Cardiac septum (tissue), 1 donor: ENCODE measurements at regions of chr4 and their contacts with region 1.

Region 1: DNA sequence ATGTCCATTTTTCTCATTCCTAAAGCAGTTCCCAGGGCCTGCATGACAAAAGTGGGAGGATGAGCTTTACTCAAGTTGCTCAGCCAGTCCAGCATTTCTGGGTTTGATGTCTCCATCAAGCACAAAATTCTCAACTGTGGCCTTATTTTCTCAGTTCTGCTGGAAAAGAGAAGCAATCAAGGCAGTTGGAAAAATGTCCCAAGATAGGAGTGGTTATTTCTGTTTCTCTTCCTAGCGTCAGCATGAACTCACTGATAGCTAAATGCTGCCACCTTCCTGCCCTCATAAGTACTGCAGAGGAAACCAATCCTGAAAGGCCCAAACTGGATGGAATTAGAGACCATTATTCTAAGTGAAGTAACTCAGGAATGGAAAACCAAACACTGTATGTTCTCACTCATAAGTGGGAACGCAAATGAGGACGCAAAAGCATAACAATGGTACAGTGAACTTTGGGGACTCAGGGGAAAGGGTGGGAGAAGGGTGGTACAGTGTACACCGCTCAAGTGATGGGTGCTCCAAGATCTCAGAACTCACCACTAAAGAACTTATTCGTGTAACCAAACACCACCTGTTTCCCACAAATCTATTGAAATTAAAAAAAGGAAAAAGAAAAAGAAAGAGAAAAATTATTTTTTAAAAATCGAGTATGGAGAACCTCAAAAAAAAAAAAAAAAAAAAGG is 29.6 kb downstream of the ADH7 start:
- DNase-seq: no peak

Region 2: GRCh38 chr4:98467627-98468072 is 937.9 kb before region 1 on chr4:
- intact Hi-C with region 1: loop called (anchors 5 kb)
- DNase-seq: no peak

Region 3: DNA sequence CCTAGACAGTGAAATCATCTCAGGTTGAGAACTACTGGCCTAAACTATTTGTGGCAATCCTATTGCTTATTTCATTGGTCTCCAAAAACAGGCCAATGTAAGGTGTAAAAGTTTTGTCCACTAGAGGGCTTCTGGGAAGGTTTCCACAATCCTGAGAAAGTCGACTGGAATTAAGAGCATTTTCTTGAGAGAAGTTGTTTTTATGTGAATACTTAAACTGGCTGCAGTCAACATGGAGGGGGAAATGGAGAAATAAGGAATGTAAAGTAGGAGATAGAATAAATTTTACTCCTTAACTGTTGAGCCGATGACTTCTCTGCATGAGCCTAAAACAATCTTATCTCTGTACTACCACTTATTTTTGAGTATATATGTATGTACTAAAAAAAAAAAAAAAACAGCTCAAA is 465.7 kb before region 1 on chr4:
- intact Hi-C with region 1: loop called (anchors 10 kb)
- DNase-seq: no peak

Region 4: DNA sequence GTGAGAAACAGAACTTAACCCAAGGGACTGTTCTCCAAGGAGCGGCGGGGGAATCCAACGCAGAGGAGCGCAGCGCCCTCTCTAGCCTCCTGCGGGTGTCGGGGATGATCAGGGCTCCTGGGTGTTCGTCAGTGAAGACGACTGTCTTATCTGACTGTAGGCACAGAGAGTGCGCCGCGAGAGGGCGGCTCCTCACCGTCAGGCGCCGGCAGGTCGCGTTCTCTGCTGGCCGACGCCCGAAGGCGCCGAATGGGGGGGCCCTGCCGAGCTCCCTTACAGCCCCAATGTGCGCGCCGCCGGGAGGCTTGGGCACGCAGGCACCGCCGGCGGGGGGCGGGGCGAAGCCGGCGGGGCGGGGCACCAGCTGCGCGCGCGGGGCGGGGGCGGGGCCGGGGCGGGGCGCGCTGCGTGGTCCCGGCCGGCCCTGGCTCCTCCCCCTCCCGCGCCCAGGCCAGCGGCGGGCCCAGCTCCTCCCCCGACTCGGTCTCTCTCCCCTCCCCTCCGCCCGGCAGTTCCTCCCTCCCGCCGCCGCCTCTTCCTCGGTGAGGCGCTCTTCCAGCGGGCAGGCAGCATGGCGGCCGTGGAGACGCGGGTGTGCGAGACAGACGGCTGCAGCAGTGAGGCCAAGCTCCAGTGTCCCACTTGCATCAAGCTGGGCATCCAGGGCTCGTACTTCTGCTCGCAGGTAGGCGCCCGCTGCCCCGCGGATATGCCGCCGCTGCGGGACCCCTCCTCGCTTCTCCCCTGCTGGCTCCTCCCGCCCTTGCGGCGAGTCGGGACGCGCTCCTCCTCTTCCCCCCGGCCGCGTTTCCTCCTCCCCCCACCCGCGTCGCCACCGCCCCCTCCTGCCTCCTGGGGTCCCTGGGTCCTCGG is 410.2 kb before region 1 on chr4 and contains the start of gene METAP1:
- intact Hi-C with region 1: loop called (anchors 10 kb)
- DNase-seq: peak; percentile 97
- total RNA-seq, gene METAP1: 56.2 TPM

Region 5: GRCh38 chr4:99117876-99118693 is 287.5 kb before region 1 on chr4:
- intact Hi-C with region 1: loop called (anchors 1 kb)
- DNase-seq: no peak

Region 6: DNA sequence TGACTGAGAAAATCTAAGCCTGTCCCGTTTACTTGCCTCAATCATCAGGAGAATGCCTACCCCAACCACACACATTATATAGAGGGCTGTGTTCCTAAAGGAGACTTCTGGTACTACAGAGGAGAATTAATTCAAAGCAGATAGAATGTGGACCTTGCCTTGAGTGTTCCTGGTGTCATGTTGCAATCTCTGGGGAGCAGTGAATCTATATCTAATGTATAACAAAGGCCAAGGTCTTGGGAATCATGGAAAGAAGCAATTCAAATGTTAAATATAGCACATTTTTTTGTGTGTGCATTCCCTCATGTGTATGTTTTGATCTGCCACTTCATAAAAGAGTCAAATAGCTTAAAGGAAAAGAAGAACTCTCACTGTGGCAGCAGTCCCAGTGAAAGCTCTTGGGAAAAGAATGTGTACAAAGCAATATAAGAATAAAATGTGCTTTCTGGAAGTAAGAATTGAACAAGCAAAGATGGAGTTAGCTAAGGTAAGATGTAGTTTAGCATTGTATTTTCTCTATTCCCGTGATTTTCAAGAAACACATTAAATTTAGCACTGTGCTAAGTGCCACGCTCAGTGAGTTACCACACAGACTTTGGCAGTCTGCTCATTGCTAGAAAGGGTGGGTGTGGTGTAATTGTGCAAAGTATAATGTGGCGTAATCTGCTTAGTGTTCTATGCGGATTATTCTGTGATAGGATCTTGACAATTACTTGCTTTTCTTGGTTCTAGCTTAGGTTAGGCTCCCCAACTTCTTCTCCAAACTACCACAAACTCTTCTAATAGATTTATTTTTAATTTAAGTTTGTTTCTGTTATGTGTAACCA is 200.2 kb before region 1 on chr4:
- intact Hi-C with region 1: loop called (anchors 2 kb)
- DNase-seq: no peak